HCT116 (cell line): ENCODE measurements at regions of chr1 and their contacts with region 1.

Region 1: DNA sequence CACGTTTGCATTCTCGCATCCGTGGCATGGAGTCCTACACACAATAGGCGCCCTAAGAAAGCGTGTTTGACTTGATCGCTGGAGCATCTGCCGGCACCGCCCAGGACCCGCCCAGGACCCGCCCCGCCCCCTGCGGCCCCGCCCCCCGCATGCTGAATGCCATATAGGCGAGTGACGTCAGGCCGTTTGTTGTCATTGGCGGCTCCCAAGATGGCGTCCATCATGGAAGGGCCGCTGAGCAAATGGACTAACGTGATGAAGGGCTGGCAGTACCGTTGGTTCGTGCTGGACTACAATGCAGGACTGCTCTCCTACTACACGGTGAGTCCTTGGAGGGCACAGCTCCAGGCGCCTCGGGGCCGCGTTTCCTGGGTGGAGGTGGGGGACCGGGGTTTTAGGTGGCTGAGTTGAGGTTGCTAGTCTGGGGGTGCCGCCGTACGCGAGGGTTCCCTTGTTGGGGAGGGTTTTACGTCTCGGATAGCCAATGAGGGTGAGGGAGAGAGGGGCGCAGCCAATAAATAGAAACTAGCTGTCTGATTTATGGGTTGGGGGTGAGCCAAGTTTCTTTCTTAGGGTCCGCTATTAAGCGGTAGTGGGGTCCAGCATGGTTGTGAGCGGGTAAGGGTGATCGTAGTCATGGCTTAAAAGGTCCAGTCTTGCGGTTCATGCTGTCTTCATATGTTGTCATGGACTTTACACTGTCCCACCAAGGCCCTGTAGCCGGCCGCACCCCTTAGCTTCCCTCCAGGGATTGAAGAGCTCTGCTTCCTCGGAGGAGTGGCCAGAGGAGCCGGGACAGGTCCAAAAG is at the start of gene OSBPL9:
- DNase-seq: peak; percentile 76
- ATAC-seq: peak; percentile 90
- H3K4me3 ChIP-seq: peak within 1 kb of the TSS; percentile 68 to 96
- H3K27ac ChIP-seq: peak within 1 kb of the TSS; percentile 7; the same call in 1 of the 2 replicates
- H3K4me1 ChIP-seq: peaks cover 21 to 48% of the 10 kb centered on the region in 2 experiments
- H3K27me3 ChIP-seq: no peaks in the 10 kb centered on the region
- CTCF ChIP-seq: no peak
- POLR2A ChIP-seq: peak; percentile 60
- RAD21 ChIP-seq: no peak
- total RNA-seq, gene OSBPL9: 52.6 TPM

Region 2: DNA sequence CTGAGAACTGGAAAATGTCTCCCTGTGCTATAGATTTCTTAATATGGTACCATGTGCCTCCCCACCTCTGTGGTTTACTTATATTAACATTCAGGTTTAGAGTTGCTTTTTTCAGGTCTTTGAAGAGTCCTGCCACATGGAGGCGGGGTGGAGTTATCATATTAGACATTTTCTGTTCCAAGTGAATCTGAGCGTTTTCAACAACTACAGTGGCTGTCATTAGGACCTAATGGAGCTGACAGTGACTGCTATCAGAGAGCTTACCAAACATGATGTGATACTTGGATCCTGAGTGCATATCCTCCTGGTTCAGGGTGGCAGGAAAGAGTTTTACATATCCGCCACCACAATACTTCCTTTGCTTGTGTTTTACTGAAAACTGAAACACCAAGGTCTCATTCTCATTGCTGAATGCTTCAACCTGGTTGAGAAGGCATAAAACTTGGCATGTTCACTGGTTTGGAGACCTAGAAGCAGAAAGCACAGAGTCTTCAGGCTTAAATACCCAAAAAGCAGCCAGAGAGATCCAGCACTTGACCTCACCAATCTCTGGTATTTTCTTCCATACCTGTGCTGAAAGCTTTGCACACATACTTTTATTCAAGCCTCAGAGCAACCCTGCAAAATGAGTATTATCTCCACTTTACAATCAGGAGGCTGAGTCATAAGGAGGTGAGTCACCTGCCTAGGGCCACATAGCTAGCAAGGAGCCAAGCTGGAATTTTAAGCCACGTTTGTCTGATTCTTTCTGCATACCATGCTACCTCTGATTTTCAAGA is 47.6 kb before region 1 on chr1:
- CTCF ChIA-PET with region 1: no interaction called
- POLR2A ChIA-PET with region 1: interaction called, 4 read pairs
- RAD21 ChIA-PET with region 1: no interaction called
- intact Hi-C with region 1: loop called (anchors 2 kb)
- DNase-seq: peak; percentile 82
- ATAC-seq: peak; percentile 84
- H3K4me3 ChIP-seq: peak overlapping the region in 1 of 2 experiments; percentile 14; a peak in 2 of 4 replicates
- H3K27ac ChIP-seq: peak overlapping the region; percentile 90
- H3K4me1 ChIP-seq: peaks cover 38 to 45% of the 10 kb centered on the region in 2 experiments
- H3K27me3 ChIP-seq: no peaks in the 10 kb centered on the region
- CTCF ChIP-seq: peak; percentile 13 to 39 (median 34); a peak in 4 of 6 replicates
- POLR2A ChIP-seq: no peak
- RAD21 ChIP-seq: peak; percentile 62